Aorta (tissue), 5 donors: ENCODE measurements at regions of chr5 and their contacts with region 1.

Region 1: GRCh38 chr5:78648359-78649210 is at the start of gene LHFPL2:
- DNase-seq: peak; percentile 86 to 93
- ATAC-seq: peak; percentile 92
- H3K4me3 ChIP-seq: peak within 1 kb of the TSS; percentile 57 to 65
- H3K27ac ChIP-seq: peak within 1 kb of the TSS; percentile 66 to 99
- H3K4me1 ChIP-seq: peaks cover 0 to 3% of the 10 kb centered on the region in 2 donors
- H3K27me3 ChIP-seq: no peaks in the 10 kb centered on the region
- total RNA-seq, gene LHFPL2: 38.6 to 43.1 TPM

Region 2: DNA sequence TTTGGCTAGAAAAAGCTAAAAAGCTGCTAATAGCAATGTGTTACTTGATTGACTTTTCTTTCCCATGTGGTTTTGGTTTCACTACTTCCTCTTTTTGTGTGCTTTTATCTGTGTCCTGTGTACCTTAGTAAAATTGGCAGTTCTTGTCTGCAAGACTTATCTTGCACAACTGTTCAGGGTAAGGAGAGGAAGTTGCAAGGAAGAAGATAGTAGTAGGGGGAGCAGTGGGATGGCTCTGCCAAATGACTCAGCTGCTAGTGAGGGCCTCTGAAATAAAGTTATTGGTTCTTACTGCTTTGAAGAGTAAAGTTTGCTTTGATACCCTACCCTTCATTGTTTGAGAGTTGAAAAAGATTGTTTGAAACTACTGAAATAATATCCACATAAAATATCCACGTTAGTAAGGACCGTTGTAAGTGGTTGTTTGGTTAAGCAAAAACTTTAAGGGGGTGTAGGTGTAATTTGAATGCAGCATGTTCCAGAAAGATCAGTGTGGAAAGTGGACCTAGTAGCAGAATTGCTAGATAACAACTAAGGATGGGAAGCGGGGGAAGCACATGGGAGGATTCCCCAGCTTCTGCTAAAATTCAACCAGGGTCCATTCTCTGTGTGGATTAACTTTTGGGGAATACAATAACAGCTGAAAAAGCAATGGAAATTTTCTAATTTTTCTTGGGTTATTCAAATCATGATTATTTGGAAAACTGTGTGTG is 164.6 kb before region 1 on chr5:
- intact Hi-C with region 1: no loop called
- DNase-seq: no peak
- ATAC-seq: peak; percentile 76
- H3K4me3 ChIP-seq: no peak overlapping the region
- H3K27ac ChIP-seq: no peak overlapping the region
- H3K4me1 ChIP-seq: peaks cover 0 to 12% of the 10 kb centered on the region in 2 donors
- H3K27me3 ChIP-seq: no peaks in the 10 kb centered on the region

Region 3: DNA sequence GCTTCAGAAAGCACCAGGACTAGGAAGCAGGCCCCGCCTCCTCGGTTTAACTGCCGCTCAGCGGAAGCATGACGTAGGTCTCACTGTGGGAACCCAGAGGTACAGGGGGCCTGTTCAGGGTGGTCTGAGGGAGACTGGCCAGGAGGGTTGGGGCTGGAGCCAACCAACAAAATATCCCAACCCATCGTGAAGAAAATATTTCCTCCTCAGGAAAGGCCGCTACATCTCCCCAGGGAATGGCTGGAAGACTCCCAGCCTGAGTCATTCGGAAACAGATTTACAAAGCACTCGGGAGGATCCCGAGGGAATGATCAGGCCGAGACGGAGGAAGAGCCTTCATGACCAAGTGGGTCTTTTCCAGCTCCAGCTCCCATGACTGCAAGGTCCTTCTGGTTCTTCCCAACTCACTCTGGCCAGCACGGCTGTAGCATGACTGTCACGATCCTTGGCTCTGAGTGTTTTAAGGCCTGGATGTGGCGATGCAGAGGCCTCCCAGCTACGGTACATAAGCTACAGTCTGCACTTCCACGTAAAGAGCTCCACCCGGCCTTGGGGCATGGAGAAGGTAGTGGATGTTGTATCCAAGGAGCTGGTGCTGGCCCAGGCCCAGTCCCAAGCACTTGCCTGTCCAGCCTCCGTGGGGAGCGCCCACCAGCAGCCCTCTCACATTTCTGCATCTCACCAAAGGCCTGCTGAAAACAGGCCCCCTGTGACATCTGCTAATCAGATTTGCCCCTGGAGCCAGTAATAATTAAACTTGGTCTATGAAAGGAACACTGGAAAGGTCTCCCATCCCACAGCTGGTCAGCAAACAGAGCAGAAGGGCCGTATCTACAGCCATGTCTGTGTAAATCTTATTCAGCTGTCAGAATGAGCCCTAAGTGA is 100.6 kb before region 1 on chr5:
- intact Hi-C with region 1: loop called in 1 of 2 experiments (anchors 5 kb)
- DNase-seq: peak; percentile 94 to 95
- ATAC-seq: peak; percentile 89
- H3K4me3 ChIP-seq: no peak overlapping the region
- H3K27ac ChIP-seq: peak overlapping the region; percentile 29 to 95
- H3K4me1 ChIP-seq: peaks cover 0 to 7% of the 10 kb centered on the region in 2 donors
- H3K27me3 ChIP-seq: no peaks in the 10 kb centered on the region

Region 4: DNA sequence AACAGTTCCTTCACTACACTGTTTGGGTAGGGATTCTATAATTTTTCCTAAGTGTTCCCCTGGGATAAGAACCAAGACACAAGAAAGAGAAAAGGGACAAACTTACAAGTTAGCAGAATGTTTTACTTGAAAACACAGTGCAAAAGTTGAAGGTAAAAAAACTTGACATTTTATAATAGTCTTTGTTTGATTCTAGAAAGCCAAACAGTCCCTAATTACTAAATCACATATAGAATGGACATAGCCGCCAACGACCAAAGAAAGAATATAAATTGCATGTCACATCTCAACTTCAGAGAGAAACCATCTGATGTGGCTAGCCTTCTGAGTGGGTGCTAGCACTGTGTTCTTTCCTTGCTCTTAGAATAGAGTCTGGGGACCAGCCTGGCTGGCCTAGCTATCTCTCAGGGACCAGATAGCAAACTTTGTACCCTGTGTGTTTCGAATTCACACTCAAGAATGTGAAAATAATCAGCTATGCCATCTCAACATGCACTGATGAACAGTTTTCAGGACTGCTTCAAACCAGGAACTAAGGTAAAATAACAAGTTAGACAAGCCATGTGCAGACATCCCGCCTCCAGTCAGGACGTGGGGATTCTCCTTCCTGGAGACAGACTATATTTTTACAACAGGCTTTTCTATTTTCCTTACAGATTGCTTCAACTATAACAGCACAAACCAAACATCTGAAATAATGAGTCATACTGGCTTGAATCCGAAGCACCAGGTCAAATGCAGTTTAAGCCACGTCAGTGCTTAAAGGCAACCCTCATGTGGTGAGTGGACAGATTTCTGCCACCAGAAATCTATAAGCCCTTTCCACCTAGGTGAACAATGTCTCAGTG is 53.8 kb before region 1 on chr5:
- intact Hi-C with region 1: loop called in 1 of 2 experiments (anchors 10 kb)
- DNase-seq: peak in 1 of 2 donors; percentile 62
- ATAC-seq: peak; percentile 90
- H3K4me3 ChIP-seq: no peak overlapping the region
- H3K27ac ChIP-seq: peak overlapping the region; percentile 93
- H3K4me1 ChIP-seq: peaks cover 10 to 16% of the 10 kb centered on the region in 2 donors
- H3K27me3 ChIP-seq: no peaks in the 10 kb centered on the region

Region 5: GRCh38 chr5:78747705-78748359 is 99.2 kb after region 1 on chr5:
- intact Hi-C with region 1: loop called in 1 of 2 experiments (anchors 5 kb)
- DNase-seq: no peak
- ATAC-seq: peak; percentile 88
- H3K4me3 ChIP-seq: no peak overlapping the region
- H3K27ac ChIP-seq: peak overlapping the region; percentile 83 to 96
- H3K4me1 ChIP-seq: peaks cover 3 to 10% of the 10 kb centered on the region in 2 donors
- H3K27me3 ChIP-seq: no peaks in the 10 kb centered on the region

Region 6: DNA sequence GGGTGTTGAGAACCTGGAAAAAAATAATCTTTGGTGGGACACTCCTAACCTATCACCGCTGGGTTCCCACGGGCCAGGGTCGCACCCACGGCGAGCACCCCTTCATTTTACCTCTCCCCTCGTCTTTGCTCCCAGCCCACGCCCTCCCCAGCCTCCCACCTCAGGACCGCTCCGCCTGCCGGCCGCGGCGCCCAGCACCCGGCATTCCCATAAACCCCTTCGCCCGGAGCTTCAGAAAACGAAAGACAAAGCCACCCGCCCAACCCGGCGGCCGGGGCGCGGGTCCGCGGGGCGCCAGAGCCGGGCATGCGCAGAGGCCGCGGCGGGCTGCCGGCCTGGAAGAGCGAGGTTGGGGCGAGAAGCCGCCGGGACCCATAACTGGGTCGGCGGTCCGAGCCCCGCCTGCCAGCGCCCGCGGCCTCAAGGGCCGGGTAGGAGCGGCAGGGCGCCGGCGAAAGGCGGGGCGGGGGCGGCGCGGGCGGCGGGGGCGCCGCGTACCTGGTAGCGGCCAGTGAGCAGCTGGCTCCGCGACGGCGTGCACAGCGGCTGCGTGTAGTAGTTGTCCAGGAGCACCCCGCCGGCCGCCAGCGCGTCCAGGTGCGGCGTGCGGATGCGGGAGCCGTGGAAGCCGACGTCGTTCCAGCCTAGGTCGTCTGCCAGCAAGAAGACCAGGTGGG is 336.0 kb after region 1 on chr5:
- intact Hi-C with region 1: loop called in 1 of 2 experiments (anchors 10 kb)
- DNase-seq: peak; percentile 89 to 94
- ATAC-seq: peak; percentile 92
- H3K4me3 ChIP-seq: peak overlapping the region; percentile 87 to 89
- H3K27ac ChIP-seq: peak overlapping the region; percentile 58 to 99
- H3K4me1 ChIP-seq: peaks cover 0 to 3% of the 10 kb centered on the region in 2 donors
- H3K27me3 ChIP-seq: no peaks in the 10 kb centered on the region